Activated naive CD4-positive, alpha-beta T cell treated with anti-CD3 and anti-CD28 coated beads for 36 hours (primary cell): ENCODE measurements at regions of chr20 and their contacts with region 1.

Region 1: DNA sequence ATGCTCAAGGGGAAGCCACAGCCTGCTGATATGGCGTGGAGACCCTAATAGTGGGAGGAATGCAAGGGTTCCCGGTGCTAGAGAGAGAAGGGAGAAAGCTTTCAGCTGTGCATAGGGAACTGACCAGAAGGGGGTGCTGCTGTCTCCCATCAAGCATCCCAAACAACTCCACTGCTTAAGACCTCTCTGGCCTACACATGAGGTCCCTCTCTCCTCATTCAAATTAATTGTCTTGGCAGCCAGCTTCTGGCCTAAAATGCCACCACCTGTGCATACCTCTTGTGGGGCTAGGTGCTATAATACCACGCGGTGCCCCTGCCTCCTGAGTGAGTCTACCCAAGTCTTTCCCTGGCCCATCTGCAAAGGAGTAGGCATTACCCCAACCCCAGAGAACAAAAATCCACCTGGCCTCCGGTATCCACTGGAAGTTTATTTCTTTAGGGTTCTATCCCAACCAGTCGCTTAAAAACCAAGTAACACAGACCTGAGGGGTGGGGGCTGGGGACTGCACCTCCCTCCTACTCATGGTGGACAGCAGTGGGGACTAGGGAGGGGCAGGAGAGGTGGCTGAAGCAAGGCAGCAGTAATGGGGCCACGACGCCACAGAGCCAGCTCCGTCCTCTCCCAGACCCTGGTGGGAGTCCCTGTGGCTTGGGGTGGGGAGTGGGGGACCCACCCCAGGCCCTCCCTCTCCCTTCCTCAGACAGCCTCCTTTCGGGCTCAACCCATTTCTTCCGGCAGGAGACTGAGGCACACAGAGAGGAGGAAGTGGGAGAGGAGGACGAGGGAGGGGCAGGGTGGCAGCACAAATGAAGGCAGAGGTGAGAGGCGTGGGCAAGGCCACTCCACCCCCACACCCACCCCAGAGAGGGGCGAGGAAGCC is 14.2 kb downstream of the ADISSP start:
- DNase-seq: peak; percentile 81
- H3K4me3 Mint-ChIP-seq: no peak overlapping the region
- H3K27ac Mint-ChIP-seq: no peak overlapping the region
- H3K4me1 Mint-ChIP-seq: peaks cover 7% of the 10 kb centered on the region
- H3K27me3 Mint-ChIP-seq: no peaks in the 10 kb centered on the region

Region 2: GRCh38 chr20:3659492-3660261 is 93.7 kb before region 1 on chr20:
- CTCF ChIA-PET with region 1: no interaction called
- intact Hi-C with region 1: no loop called
- DNase-seq: no peak
- H3K4me3 Mint-ChIP-seq: no peak overlapping the region
- H3K27ac Mint-ChIP-seq: no peak overlapping the region
- H3K4me1 Mint-ChIP-seq: peaks cover 4% of the 10 kb centered on the region
- H3K27me3 Mint-ChIP-seq: peaks cover 29% of the 10 kb centered on the region

Region 3: GRCh38 chr20:3846740-3847428 is 93.5 kb after region 1 on chr20 and contains the start of gene MAVS:
- CTCF ChIA-PET with region 1: no interaction called
- intact Hi-C with region 1: loop called (anchors 2 kb)
- DNase-seq: peak; percentile 84
- H3K4me3 Mint-ChIP-seq: peak within 1 kb of the TSS; percentile 85
- H3K27ac Mint-ChIP-seq: peak within 1 kb of the TSS; percentile 83
- H3K4me1 Mint-ChIP-seq: peaks cover 29% of the 10 kb centered on the region
- H3K27me3 Mint-ChIP-seq: no peaks in the 10 kb centered on the region
- total RNA-seq, gene MAVS: 14.8 to 16.0 TPM

Region 4: DNA sequence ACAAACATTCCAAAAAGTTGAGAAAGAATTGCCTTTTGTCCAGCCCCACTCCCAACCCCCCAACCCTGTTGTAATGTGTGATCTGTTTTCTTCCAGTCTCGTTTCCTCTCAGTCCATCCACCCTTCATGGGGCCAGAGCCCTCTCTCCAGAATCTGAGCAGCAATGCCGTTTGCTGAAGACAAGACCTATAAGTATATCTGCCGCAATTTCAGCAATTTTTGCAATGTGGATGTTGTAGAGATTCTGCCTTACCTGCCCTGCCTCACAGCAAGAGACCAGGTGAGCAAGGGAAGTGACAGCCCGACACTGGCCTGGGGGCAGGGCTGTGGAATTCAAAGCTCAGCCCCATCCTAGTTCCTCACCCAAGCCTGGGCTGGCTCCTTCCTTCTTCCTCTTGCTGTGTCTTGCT is 101.1 kb after region 1 on chr20:
- CTCF ChIA-PET with region 1: interaction called, 5 read pairs
- intact Hi-C with region 1: loop called (anchors 1 kb)
- DNase-seq: no peak
- H3K4me3 Mint-ChIP-seq: no peak overlapping the region
- H3K27ac Mint-ChIP-seq: no peak overlapping the region
- H3K4me1 Mint-ChIP-seq: peaks cover 9% of the 10 kb centered on the region
- H3K27me3 Mint-ChIP-seq: no peaks in the 10 kb centered on the region